OCI-LY7 (cell line): ENCODE measurements at regions of chr7 and their contacts with region 1.

Region 1: DNA sequence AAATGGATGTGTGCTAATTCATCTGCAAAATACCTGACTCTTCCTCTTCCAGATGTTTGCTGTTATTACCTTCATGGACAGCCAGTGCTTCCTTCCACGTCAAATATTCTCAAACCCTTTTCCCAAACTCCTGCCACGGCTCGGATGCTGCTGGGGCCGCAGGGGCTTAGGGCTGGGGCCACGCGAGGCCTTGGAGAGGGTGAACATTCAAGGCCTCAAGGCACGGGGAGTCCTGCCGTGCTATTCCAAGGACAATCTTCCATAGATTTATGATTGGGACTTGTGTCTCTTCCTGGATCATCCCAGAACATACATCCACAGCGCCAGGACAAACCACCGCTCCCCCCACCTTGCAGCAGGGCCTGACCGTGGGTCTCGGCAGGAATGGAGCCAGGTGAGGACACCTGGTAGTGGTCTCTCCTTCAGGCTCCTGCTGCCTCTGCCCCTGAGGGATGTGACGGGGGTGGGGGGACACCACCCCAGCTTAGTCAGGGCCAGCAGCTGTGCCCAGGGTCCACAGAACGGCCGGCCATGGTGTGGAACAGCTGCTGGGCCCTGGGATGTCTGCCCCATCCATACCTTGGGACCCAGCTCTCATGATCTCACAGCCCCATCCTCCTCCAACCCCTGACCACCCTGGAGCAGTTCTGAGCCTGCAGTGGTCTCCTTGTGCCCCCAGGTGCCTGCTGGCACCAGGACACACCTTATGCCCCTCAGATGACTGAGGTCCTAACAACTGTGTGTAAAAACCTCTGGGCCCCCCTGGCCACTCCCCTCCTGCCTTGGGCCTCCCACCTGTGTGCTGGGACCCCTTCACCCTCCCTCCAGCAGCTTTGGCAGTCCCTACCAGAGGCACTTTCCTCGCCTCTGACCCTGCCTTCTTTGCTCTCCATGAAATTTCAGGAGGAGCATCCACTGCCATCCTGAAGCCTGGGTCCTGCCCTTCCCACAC is 16.7 kb downstream of the VIPR2 start:
- DNase-seq: no peak
- H3K4me3 ChIP-seq: no peak overlapping the region
- H3K27ac ChIP-seq: no peak overlapping the region
- H3K4me1 ChIP-seq: no peaks in the 10 kb centered on the region
- CTCF ChIP-seq: no peak

Region 2: DNA sequence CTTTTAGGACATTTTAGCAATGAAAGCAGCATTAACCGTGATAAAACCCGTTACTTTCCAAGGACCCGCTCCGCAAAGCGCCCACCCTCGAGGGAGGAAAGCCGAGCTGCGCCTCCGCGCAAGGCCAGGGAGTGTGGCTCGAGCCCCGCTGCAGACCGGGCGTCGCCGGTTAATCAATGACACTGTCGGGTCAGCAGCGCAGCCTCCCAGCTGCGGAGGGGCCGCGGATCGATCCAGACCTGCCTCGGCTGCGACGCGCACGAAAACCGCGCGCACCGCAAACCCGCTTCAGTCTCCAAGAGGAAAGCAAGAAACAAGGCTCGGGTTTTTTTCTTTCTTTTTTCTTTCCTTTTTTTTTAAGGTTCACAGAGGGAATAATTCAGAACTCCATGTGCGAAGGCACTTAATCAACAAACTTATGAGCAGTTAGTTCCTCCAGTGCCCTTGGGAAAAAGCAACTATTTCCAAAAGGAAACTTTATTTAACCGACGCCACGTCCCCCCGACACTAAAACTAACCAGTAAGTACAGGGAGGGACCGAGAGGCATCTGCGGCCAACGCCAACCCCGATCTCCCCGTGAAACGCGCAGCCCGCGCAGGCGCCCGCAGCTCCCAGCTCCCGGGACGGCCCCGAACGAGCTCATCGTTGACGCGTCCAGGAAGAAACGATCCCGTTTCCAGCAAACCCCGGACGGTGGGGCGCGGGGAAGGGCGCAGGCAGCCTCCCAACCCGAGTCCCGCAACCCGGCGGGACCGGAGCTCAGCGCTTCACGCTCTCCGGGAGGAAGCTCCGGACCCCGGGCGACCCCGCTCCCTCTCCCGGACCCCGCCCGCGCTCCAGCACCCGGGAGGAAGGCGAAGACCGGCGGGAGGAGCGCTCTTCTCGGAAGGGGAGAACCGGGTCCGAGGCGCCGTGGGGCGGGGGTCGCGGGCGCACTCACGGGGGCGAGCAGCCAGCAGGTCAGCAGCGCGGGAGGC is 16.1 kb after region 1 on chr7:
- CTCF ChIA-PET with region 1: no interaction called
- POLR2A ChIA-PET with region 1: no interaction called
- intact Hi-C with region 1: no loop called
- DNase-seq: no peak
- H3K4me3 ChIP-seq: no peak overlapping the region
- H3K27ac ChIP-seq: no peak overlapping the region
- H3K4me1 ChIP-seq: no peaks in the 10 kb centered on the region
- CTCF ChIP-seq: no peak

Region 3: DNA sequence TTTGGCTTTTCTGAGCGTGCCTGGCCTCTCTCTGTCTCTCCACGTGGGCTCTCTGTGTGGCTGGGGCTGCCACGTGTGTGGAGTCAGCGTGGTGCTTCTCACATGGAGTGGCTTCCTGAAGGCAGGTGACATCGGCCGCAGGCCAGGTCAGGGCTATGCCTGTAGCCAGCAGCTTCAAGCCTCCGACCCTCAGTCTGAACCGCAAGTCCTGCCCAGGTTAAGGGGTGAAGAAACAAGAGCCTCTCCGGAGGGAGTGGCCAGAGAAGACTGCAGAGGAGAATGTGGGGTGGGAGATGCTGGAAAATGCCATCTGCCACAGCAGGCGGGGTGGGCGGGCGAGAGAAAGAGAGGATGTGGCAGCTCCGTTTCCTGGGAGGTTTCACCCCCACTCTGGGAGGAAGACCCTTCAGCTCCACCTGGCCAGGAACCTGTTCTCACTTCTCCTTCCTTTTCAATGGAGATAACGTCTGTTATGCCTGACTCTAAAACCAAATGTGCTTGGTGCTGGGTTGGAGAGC is 31.0 kb after region 1 on chr7:
- CTCF ChIA-PET with region 1: no interaction called
- POLR2A ChIA-PET with region 1: no interaction called
- intact Hi-C with region 1: loop called (anchors 2 kb)
- DNase-seq: no peak
- H3K4me3 ChIP-seq: no peak overlapping the region
- H3K27ac ChIP-seq: no peak overlapping the region
- H3K4me1 ChIP-seq: no peaks in the 10 kb centered on the region
- CTCF ChIP-seq: no peak

Region 4: GRCh38 chr7:159169391-159169790 is 41.4 kb after region 1 on chr7:
- CTCF ChIA-PET with region 1: no interaction called
- POLR2A ChIA-PET with region 1: no interaction called
- intact Hi-C with region 1: no loop called
- DNase-seq: no peak
- H3K4me3 ChIP-seq: no peak overlapping the region
- H3K27ac ChIP-seq: no peak overlapping the region
- H3K4me1 ChIP-seq: no peaks in the 10 kb centered on the region
- CTCF ChIP-seq: no peak